Activated CD8-positive, alpha-beta T cell treated with anti-CD3 and anti-CD28 coated beads for 36 hours (primary cell): ENCODE measurements at regions of chr17 and their contacts with region 1.

Region 1: GRCh38 chr17:56779898-56780733 is 53.6 kb downstream of the C17orf67 start:
- DNase-seq: peak; percentile 89
- ATAC-seq: peak; percentile 94
- H3K4me3 Mint-ChIP-seq: peak overlapping the region; percentile 75
- H3K27ac Mint-ChIP-seq: peak overlapping the region; percentile 85
- H3K4me1 Mint-ChIP-seq: peaks cover 27% of the 10 kb centered on the region
- H3K27me3 Mint-ChIP-seq: no peaks in the 10 kb centered on the region
- CTCF ChIP-seq: peak; percentile 99

Region 2: DNA sequence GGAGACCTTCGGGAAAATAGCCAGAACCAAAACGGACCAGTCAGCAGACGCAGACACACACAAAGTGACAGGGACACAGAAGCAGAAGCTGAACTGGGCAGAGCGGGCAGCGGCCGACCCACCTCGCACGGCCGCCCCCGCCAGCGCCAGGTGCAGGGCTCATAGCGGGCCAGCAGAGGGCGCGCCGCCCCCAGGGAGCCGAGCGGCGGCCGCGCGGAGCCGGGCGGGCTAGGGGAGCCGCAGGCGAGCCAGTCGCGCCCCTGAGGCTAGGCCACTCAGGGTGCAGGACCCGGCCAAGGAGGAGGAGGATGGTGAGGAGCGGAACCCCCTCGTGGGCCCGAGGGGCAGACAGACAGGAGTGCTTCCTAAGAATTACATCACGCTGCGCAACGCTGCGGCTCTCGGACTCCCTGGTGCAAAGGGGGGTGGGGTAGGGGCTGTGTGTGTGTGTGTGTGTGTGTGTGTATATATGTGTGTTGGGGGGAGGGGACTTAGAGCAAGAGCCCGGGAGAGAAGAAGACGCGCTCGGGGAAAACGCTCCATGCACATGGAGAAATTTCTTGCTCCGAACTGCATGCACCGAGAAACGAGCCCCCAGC is 187.5 kb before region 1 on chr17:
- CTCF ChIA-PET with region 1: interaction called, 58 read pairs
- POLR2A ChIA-PET with region 1: interaction called, 3 read pairs
- intact Hi-C with region 1: loop called (anchors 2 kb)
- DNase-seq: peak; percentile 70
- ATAC-seq: peak; percentile 65
- H3K4me3 Mint-ChIP-seq: peak overlapping the region; percentile 73
- H3K27ac Mint-ChIP-seq: no peak overlapping the region
- H3K4me1 Mint-ChIP-seq: peaks cover 14% of the 10 kb centered on the region
- H3K27me3 Mint-ChIP-seq: peaks cover 18% of the 10 kb centered on the region
- CTCF ChIP-seq: peak; percentile 94

Region 3: DNA sequence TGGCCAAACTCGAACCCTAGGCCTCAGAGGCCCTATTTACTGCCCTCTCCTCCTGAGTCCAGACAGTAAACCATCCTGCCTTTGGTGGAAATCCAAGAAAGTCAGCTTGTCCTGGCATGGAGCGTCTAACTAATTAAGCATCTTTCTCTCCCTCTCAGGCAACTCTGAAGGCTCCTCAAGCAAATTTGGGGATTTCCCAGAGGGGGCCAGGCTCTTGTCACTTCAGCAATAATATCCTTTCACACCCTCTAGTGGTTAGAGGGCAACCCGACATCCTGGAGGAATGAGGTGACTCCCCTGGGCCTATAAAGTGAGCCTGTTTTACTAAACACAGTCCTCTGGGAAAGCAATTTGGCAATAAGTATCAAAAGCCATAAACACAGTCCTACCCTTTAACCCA is 126.2 kb before region 1 on chr17:
- CTCF ChIA-PET with region 1: interaction called, 12 read pairs
- POLR2A ChIA-PET with region 1: interaction called, 3 read pairs
- intact Hi-C with region 1: no loop called
- DNase-seq: peak; percentile 86
- ATAC-seq: peak; percentile 99
- H3K4me3 Mint-ChIP-seq: no peak overlapping the region
- H3K27ac Mint-ChIP-seq: peak overlapping the region; percentile 8
- H3K4me1 Mint-ChIP-seq: peaks cover 6% of the 10 kb centered on the region
- H3K27me3 Mint-ChIP-seq: no peaks in the 10 kb centered on the region
- CTCF ChIP-seq: peak; percentile 74

Region 4: DNA sequence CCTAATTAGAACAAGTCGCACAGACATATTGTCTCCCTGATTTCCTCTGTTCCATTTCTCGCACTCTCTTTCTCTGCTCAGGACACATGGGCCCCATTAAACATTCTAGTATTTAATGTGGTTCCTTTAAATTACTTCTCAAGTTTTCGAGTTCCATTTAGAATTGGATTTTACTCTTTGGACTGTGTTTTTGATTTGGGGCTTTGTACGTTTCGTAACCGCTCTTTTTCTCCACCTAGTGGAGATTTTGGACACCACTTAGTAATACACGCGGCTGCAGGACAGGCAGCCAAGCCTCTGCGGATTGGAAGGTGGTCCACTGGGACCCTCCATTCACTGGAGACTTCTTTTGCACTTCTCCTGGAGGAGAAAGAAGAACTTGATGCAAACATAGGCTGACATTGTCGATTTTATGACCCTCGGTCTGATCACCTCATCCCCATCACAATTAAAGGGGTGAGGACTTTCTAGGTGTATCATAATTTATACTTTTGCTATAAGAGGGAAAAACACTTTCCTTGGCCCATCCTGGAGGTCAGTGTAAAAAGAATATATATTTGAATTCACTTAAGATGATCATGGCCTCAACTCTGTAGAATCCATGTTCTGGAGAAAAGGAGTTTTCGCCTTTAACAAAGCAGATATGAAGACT is 100.9 kb before region 1 on chr17:
- CTCF ChIA-PET with region 1: interaction called, 15 read pairs
- POLR2A ChIA-PET with region 1: no interaction called
- intact Hi-C with region 1: no loop called
- DNase-seq: peak; percentile 20
- ATAC-seq: peak; percentile 24
- H3K4me3 Mint-ChIP-seq: peak overlapping the region; percentile 56
- H3K27ac Mint-ChIP-seq: no peak overlapping the region
- H3K4me1 Mint-ChIP-seq: peaks cover 22% of the 10 kb centered on the region
- H3K27me3 Mint-ChIP-seq: peaks cover 38% of the 10 kb centered on the region
- CTCF ChIP-seq: peak; percentile 73

Region 5: DNA sequence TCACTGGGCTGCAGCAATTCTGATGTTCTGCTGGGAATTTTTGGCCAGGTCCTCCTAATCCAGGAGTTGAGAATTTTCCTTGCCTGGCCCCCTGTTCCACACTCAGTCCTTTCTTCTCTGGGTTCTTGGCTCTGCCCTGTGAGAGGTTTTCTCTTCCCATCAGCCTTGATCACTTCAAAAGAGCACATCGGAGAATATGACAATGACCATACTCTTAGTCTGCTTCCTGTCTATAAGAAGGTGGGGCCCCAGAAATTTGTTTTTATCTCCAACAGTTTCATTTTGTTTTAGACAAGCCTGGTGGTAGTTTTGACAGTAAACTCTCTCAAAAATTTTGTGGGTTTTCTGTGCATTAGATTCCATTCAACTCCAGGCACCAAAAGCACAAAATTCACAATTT is 17.1 kb before region 1 on chr17:
- CTCF ChIA-PET with region 1: interaction called, 17 read pairs
- POLR2A ChIA-PET with region 1: interaction called, 3 read pairs
- intact Hi-C with region 1: no loop called
- DNase-seq: no peak
- ATAC-seq: peak; percentile 88
- H3K4me3 Mint-ChIP-seq: no peak overlapping the region
- H3K27ac Mint-ChIP-seq: peak overlapping the region; percentile 50
- H3K4me1 Mint-ChIP-seq: peaks cover 19% of the 10 kb centered on the region
- H3K27me3 Mint-ChIP-seq: no peaks in the 10 kb centered on the region
- CTCF ChIP-seq: no peak

Region 6: DNA sequence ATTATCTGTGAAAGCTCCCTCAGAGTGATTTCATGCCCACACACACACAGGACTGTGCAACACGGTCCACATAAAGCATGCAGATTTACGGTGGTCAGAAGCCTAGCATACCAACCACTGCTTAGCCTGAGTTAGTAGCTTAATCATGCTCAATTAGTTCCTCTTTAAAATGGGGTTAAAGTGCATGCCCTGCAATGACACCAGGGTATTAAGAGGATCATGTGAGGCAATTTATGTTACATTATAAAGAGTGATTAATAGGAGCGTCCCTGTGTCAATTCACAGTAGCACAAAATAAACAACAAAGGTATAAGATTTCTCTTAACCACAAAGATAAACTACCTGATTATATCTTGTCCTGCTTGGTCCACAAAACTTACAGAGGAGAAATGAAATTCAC is 13.8 kb after region 1 on chr17:
- CTCF ChIA-PET with region 1: interaction called, 12 read pairs
- POLR2A ChIA-PET with region 1: interaction called, 4 read pairs
- intact Hi-C with region 1: no loop called
- DNase-seq: no peak
- ATAC-seq: no peak
- H3K4me3 Mint-ChIP-seq: no peak overlapping the region
- H3K27ac Mint-ChIP-seq: no peak overlapping the region
- H3K4me1 Mint-ChIP-seq: no peaks in the 10 kb centered on the region
- H3K27me3 Mint-ChIP-seq: no peaks in the 10 kb centered on the region
- CTCF ChIP-seq: no peak

Region 7: DNA sequence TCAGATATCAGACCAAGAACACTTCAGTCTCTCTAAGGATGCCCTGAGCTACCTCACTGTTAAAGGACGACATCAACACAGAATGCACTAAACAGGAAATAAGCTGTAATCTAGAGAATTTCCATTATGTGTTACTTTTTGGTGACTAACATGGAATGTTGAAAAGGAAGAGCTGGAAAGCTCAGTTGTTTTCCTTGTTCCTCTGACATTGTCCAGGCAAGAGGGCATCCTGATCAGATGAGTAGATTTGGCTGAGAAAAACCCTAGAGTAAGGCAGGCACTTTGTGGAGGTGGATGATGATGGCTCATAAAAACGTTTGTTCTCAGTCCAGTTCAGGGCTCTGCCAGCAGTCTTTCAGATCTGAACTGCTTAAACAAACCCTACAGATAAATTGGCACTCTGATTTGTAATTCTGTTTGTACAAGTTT is 87.8 kb after region 1 on chr17:
- CTCF ChIA-PET with region 1: no interaction called
- POLR2A ChIA-PET with region 1: no interaction called
- intact Hi-C with region 1: no loop called
- DNase-seq: no peak
- ATAC-seq: no peak
- H3K4me3 Mint-ChIP-seq: no peak overlapping the region
- H3K27ac Mint-ChIP-seq: no peak overlapping the region
- H3K4me1 Mint-ChIP-seq: peaks cover 9% of the 10 kb centered on the region
- H3K27me3 Mint-ChIP-seq: no peaks in the 10 kb centered on the region
- CTCF ChIP-seq: no peak